ENCODE measurements at regions of chr19 and their contacts with region 1.

Region 1: DNA sequence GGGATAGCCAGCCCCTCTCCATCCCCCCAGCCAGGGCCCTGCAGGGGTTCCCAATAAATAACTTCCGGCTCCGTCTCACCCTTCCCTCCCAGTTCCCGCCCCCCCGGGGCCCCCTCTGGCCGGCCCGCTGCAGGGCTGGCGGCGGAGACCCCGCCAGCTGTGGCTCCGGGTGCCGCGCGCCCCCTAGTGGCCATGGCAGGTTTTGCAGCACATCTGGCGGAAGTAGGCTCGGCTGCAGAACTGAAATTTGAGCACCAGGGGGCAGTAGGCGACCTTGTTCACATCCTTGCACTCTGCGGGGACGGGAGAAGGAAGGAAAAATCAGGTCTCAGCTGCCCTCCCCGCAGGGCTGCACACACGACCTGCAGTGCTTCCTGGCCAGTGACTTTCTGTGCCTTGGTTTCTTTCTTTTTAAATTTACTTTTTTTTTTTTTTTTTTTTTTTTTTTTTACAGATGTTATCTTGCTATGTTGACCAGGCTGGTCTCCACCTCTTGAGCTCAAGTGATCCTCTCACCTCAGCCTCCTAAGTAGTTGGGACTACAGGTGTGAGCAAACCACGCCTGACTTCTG is 3.6 kb upstream of the MYO1F start:
- DNase-seq: peak; percentile 79 to 89 (median 82)
- H3K4me3 ChIP-seq: no peak overlapping the region
- H3K4me3 Mint-ChIP-seq: no peak overlapping the region
- H3K27ac ChIP-seq: no peak overlapping the region
- H3K27ac Mint-ChIP-seq: peak overlapping the region in 1 of 8 donors; percentile 57
- H3K4me1 ChIP-seq: peaks cover 41% of the 10 kb centered on the region
- H3K4me1 Mint-ChIP-seq: peaks cover 17 to 50% (median 27%) of the 10 kb centered on the region in 3 donors
- H3K27me3 ChIP-seq: no peaks in the 10 kb centered on the region
- H3K27me3 Mint-ChIP-seq: no peaks in the 10 kb centered on the region

Region 2: DNA sequence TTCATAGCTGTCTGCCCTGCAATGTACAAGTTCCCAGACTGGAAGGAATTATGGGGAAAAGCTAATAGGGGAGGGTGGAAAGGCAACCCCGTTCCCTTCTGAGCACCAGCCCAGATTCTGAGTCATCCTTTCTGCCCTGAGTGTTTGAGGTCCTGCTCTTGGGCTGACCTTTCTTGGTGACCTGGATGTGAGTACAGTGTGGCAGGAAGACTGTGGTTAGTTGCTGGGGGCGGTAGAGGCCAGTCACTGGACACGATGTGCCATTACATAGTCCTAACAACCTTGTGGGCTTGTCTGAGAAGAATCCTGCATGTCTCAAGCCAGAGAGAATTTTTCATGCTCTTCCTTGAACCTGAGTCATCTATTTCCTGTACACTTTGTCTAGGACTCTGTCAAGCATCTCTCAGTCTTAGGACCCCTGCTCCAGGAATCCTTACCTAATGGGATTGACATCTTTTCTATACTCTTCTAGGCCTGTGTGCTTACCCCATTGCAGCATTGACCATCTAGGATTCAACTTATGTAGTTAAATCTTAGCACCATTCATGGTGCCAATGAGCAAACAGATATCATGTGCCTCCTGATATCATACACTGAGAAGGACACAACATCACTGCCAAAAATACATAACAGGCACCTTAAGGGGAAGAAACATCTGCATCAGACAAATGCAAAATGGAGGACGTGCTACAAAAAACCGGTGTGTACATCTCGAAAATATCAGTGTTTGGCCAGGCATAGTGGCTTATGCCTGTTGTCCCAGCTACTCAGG is 225.0 kb before region 1 on chr19:
- CTCF ChIA-PET with region 1: interaction called, 31 read pairs
- POLR2A ChIA-PET with region 1: no interaction called
- DNase-seq: no peak
- H3K4me3 ChIP-seq: no peak overlapping the region
- H3K4me3 Mint-ChIP-seq: no peak overlapping the region
- H3K27ac ChIP-seq: no peak overlapping the region
- H3K27ac Mint-ChIP-seq: no peak overlapping the region
- H3K4me1 ChIP-seq: peaks cover 6% of the 10 kb centered on the region
- H3K4me1 Mint-ChIP-seq: peaks cover 2 to 4% (median 3%) of the 10 kb centered on the region in 3 donors
- H3K27me3 ChIP-seq: no peaks in the 10 kb centered on the region
- H3K27me3 Mint-ChIP-seq: peaks cover 14% of the 10 kb centered on the region in 2 donors

Region 3: GRCh38 chr19:8487137-8487851 is 93.5 kb before region 1 on chr19:
- CTCF ChIA-PET with region 1: interaction called, 46 read pairs
- POLR2A ChIA-PET with region 1: no interaction called
- DNase-seq: peak; percentile 35 to 71 (median 64)
- H3K4me3 ChIP-seq: no peak overlapping the region
- H3K4me3 Mint-ChIP-seq: peak overlapping the region; percentile 32 to 86 (median 66)
- H3K27ac ChIP-seq: no peak overlapping the region
- H3K27ac Mint-ChIP-seq: peak overlapping the region; percentile 78 to 97 (median 90)
- H3K4me1 ChIP-seq: peaks cover 25% of the 10 kb centered on the region
- H3K4me1 Mint-ChIP-seq: peaks cover 25 to 43% (median 35%) of the 10 kb centered on the region in 3 donors
- H3K27me3 ChIP-seq: no peaks in the 10 kb centered on the region
- H3K27me3 Mint-ChIP-seq: no peaks in the 10 kb centered on the region

Region 4: GRCh38 chr19:8513687-8514504 is 66.9 kb before region 1 on chr19 and contains the start of gene ZNF414:
- CTCF ChIA-PET with region 1: interaction called, 120 read pairs
- POLR2A ChIA-PET with region 1: interaction called, 14 read pairs
- DNase-seq: peak; percentile 94 to 98 (median 97)
- H3K4me3 ChIP-seq: peak within 1 kb of the TSS; percentile 68
- H3K4me3 Mint-ChIP-seq: peak within 1 kb of the TSS; percentile 89 to 97 (median 93)
- H3K27ac ChIP-seq: peak within 1 kb of the TSS; percentile 83
- H3K27ac Mint-ChIP-seq: peak within 1 kb of the TSS; percentile 94 to 99 (median 98)
- H3K4me1 ChIP-seq: peaks cover 64% of the 10 kb centered on the region
- H3K4me1 Mint-ChIP-seq: peaks cover 46 to 62% (median 52%) of the 10 kb centered on the region in 3 donors
- H3K27me3 ChIP-seq: no peaks in the 10 kb centered on the region
- H3K27me3 Mint-ChIP-seq: peaks cover 0 to 4% of the 10 kb centered on the region in 2 donors
- total RNA-seq, gene ZNF414: 25.7 to 26.0 TPM

Region 5: GRCh38 chr19:8552810-8553209 is 28.0 kb before region 1 on chr19:
- CTCF ChIA-PET with region 1: interaction called, 112 read pairs
- POLR2A ChIA-PET with region 1: interaction called, 4 read pairs
- DNase-seq: no peak
- H3K4me3 ChIP-seq: no peak overlapping the region
- H3K4me3 Mint-ChIP-seq: no peak overlapping the region
- H3K27ac ChIP-seq: no peak overlapping the region
- H3K27ac Mint-ChIP-seq: peak overlapping the region in 6 of 8 donors; percentile 50 to 97 (median 68)
- H3K4me1 ChIP-seq: peaks cover 6% of the 10 kb centered on the region
- H3K4me1 Mint-ChIP-seq: peaks cover 10 to 27% (median 12%) of the 10 kb centered on the region in 3 donors
- H3K27me3 ChIP-seq: no peaks in the 10 kb centered on the region
- H3K27me3 Mint-ChIP-seq: peaks cover 0 to 2% of the 10 kb centered on the region in 2 donors

Region 6: GRCh38 chr19:8600064-8600463 is 19.3 kb after region 1 on chr19:
- CTCF ChIA-PET with region 1: interaction called, 34 read pairs
- POLR2A ChIA-PET with region 1: no interaction called
- DNase-seq: no peak
- H3K4me3 ChIP-seq: no peak overlapping the region
- H3K4me3 Mint-ChIP-seq: no peak overlapping the region
- H3K27ac ChIP-seq: no peak overlapping the region
- H3K27ac Mint-ChIP-seq: peak overlapping the region in 2 of 8 donors; percentile 54 to 69
- H3K4me1 ChIP-seq: no peaks in the 10 kb centered on the region
- H3K4me1 Mint-ChIP-seq: peaks cover 0 to under 1% (median under 1%) of the 10 kb centered on the region in 3 donors
- H3K27me3 ChIP-seq: no peaks in the 10 kb centered on the region
- H3K27me3 Mint-ChIP-seq: no peaks in the 10 kb centered on the region

Region 7: DNA sequence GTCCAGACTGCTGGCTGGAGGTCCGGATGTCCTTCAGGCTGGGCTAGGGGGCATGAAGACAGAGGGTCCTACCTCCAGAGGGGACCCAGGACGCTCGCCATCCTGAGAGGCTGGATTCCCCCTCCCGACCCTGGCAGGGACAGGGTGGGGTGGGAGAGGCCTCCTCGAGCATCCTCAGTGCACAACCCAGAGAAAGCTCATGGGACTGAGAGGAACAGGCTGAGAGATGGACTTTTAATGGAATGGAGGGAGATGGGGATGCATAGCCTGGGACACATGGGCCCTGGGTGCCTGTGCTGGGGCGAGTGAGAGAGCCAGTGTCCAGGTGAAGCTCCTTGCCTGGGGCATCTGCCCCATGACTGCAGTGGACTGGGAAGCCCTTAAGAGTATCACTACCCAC is 114.7 kb after region 1 on chr19:
- CTCF ChIA-PET with region 1: interaction called, 10 read pairs
- POLR2A ChIA-PET with region 1: no interaction called
- DNase-seq: no peak
- H3K4me3 ChIP-seq: no peak overlapping the region
- H3K4me3 Mint-ChIP-seq: no peak overlapping the region
- H3K27ac ChIP-seq: no peak overlapping the region
- H3K27ac Mint-ChIP-seq: no peak overlapping the region
- H3K4me1 ChIP-seq: peaks cover 8% of the 10 kb centered on the region
- H3K4me1 Mint-ChIP-seq: peaks cover 14 to 18% (median 16%) of the 10 kb centered on the region in 3 donors
- H3K27me3 ChIP-seq: no peaks in the 10 kb centered on the region
- H3K27me3 Mint-ChIP-seq: peaks cover 5 to 32% of the 10 kb centered on the region in 2 donors

Region 8: GRCh38 chr19:8910775-8911414 is 330.1 kb after region 1 on chr19:
- CTCF ChIA-PET with region 1: no interaction called
- POLR2A ChIA-PET with region 1: no interaction called
- DNase-seq: no peak
- H3K4me3 ChIP-seq: no peak overlapping the region
- H3K4me3 Mint-ChIP-seq: no peak overlapping the region
- H3K27ac ChIP-seq: no peak overlapping the region
- H3K27ac Mint-ChIP-seq: no peak overlapping the region
- H3K4me1 ChIP-seq: no peaks in the 10 kb centered on the region
- H3K4me1 Mint-ChIP-seq: no peaks in the 10 kb centered on the region
- H3K27me3 ChIP-seq: no peaks in the 10 kb centered on the region
- H3K27me3 Mint-ChIP-seq: peaks cover 6 to 11% of the 10 kb centered on the region in 2 donors

Measured in CD8-positive, alpha-beta memory T cell (primary cell).